Common myeloid progenitor, CD34-positive (primary cell): ENCODE measurements at regions of chr9 and their contacts with region 1.

Region 1: GRCh38 chr9:115013998-115014397 is 83.6 kb upstream of the TNFSF8 start:
- DNase-seq: peak; percentile 72 to 90 (median 83)
- H3K4me3 ChIP-seq: no peak overlapping the region
- H3K27ac ChIP-seq: no peak overlapping the region
- H3K4me1 ChIP-seq: peaks cover 0 to 2% (median 0%) of the 10 kb centered on the region in 4 experiments
- H3K27me3 ChIP-seq: no peaks in the 10 kb centered on the region

Region 2: DNA sequence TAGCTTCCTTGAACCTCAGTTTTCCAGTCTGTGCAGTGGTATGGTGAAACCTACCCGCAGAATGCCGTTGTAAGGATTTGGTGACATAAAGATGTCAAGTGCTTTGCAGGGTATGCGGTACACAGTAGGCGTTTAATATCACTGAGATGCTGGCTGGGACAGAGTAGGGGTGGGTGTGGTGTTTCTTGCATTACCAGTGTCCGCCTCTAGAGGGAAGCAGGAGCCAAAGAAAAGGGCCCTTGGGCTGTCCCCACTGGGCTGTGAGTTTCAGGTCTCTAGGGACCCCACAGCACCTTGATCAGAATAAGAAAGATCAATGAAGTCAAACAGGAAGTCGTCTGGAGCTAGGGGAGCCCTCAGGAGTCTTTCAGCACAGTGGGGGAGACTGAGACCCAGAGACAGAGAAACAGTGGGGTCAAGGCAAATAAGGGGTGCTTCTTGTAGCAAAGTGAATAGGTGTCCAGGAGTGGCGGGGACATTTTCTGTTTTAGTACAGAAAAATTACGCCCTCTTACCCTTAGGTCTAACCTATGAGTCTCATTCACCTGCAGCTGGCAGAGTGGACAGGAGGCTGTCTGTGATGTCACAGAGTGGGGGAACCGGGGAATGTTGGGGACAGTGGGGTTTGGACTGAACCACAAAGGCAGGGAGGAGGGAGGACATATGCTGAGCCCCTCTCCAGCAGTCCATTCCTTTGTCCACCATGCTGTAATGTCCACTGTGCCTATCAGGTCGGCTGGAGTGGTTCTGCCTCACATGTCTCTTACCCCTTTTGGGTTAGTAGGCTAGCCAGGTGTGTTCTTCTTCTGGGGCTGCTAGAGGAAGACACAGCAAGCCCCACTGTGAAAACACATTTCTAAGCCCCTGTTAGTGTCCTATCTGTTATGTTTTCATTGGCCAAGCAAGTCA is 351.7 kb before region 1 on chr9:
- CTCF ChIA-PET with region 1: interaction called, 10 read pairs
- POLR2A ChIA-PET with region 1: no interaction called
- DNase-seq: peak; percentile 42 to 63 (median 56)
- H3K4me3 ChIP-seq: no peak overlapping the region
- H3K27ac ChIP-seq: no peak overlapping the region
- H3K4me1 ChIP-seq: peaks cover 0 to 8% (median 5%) of the 10 kb centered on the region in 4 experiments
- H3K27me3 ChIP-seq: no peaks in the 10 kb centered on the region

Region 3: DNA sequence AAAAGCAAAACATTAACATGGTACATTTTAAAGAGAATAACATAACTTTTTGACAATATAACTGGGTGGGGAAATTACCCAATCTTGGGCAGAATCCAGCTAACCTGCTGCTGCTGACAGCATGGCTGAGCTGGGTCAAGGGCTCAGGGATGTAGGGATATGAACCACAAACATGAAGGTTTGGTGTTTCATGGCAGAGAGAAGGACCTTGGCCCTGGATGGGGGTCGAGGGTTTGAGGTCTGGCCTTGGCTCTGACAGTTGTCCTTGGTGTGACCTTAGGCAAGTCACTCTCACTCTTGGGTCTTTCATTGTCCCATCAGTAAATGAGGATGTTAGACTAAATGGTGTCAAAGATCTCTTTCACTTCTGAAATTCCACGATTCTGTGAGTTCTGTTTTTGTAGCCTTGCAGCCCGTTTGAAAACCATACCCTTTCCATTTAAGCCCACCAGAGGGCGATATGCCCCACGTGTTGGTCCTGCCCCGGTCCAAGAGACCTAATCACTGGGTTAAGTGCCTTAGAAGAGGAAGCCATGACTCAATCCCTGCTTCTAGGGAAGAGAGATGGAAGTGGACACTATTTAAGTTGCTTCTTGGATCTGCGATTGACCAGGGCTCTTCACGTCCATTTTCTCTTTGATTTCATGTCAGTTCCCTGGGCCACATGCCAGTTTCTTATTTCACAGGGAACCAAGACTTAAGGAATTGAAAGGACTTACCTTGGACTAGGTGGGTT is 275.2 kb before region 1 on chr9:
- CTCF ChIA-PET with region 1: interaction called, 90 read pairs
- POLR2A ChIA-PET with region 1: no interaction called
- DNase-seq: peak; percentile 83 to 93 (median 88)
- H3K4me3 ChIP-seq: no peak overlapping the region
- H3K27ac ChIP-seq: no peak overlapping the region
- H3K4me1 ChIP-seq: peaks cover 0 to 8% (median 2%) of the 10 kb centered on the region in 4 experiments
- H3K27me3 ChIP-seq: peaks cover 0 to 2% (median 0%) of the 10 kb centered on the region in 5 experiments

Region 4: DNA sequence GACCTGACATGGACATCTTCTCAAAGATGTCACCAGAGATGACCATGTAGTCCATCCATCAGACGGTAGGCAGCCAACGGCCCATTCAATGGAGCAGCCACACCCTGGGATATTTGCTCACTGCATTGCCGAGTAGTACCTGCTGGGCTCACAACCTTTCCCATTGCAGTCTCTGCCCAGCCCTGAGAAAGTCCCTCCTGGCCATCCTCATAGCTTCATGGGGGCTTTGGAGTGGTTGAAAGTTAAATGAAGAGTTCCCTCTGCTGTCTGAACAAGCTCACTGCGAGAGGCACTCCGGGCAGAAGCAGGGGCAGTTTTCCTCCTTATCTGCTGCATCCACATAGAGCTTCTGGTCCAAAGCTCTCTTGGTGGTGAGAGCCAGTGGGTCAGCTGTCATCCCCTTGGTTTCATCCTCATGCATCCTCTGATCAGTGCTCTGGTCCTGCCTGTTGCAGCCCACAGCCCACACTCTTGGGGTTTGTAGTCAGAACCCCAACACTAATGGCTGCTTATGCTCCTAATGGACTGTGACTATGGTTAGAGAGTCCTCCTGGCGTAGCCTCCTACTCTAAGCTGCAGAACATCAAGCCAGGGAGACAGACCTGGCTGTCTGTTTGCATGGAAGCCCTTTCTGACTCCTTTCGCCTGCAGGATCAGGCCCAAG is 107.0 kb before region 1 on chr9:
- CTCF ChIA-PET with region 1: interaction called, 79 read pairs
- POLR2A ChIA-PET with region 1: no interaction called
- DNase-seq: peak; percentile 46 to 63 (median 55)
- H3K4me3 ChIP-seq: no peak overlapping the region
- H3K27ac ChIP-seq: no peak overlapping the region
- H3K4me1 ChIP-seq: peaks cover 0 to 10% (median 5%) of the 10 kb centered on the region in 4 experiments
- H3K27me3 ChIP-seq: no peaks in the 10 kb centered on the region

Region 5: DNA sequence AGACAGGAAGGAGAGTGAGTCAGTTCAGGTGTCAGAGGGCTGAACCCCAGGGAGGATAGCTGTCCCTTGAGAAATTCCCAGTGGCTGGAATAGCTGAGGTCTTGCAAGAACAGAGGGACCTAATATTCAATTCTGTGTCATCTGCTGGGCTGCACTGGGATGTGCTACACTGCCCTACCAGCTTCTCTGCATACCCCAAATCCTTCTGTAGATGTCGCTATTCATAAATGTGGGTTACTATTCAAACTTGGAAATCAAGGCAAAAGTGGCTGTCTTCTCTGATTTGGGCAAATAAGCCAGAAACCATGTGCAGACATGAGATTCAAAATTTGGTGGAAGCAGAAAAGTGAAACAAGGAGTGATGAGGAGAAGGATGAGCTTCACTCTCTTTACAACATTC is 99.9 kb before region 1 on chr9:
- CTCF ChIA-PET with region 1: interaction called, 79 read pairs
- POLR2A ChIA-PET with region 1: no interaction called
- DNase-seq: no peak
- H3K4me3 ChIP-seq: no peak overlapping the region
- H3K27ac ChIP-seq: no peak overlapping the region
- H3K4me1 ChIP-seq: peaks cover 2 to 19% (median 8%) of the 10 kb centered on the region in 4 experiments
- H3K27me3 ChIP-seq: no peaks in the 10 kb centered on the region

Region 6: DNA sequence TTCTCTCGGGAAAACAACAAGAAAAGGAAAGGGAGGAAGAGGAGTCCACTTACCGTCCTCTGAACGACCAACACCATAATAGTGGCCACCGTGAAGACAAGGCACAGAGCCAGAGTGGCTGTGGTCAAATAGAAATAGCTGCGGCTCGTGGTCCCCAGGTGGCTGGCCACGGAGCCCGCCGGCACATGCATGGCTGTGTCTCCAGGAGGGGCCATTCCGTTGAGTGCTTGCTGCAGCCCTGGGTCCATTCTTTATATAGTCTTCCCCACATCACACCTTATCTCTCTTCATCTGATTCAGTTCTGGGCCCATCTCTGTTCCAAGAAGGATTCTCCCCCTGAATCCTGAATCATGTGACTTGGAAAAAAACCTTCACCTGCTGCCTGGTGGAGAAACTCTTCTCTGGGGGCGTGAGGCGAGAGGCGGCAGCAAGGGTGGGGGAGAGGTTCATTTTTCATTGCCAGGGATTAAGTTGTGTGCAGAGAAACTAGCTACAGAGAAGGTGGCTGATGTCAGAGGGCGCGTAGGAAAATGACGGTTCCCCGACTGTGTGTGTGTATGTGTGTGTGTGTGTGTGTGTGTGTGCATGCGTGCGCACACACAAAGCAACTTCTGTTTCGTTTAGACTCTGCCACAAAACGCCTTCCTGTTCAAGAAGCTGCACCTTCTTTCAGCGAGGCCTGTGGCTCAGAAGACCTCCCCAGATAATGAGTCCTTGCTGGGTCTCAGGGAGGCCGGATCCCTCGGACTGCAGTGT is 83.8 kb before region 1 on chr9 and contains the start of gene TNFSF8:
- CTCF ChIA-PET with region 1: interaction called, 16 read pairs
- POLR2A ChIA-PET with region 1: no interaction called
- DNase-seq: peak; percentile 79 to 96 (median 95)
- H3K4me3 ChIP-seq: peak within 1 kb of the TSS; percentile 29 to 84 (median 69)
- H3K27ac ChIP-seq: peak within 1 kb of the TSS; percentile 47 to 72
- H3K4me1 ChIP-seq: peaks cover 25 to 45% (median 37%) of the 10 kb centered on the region in 4 experiments
- H3K27me3 ChIP-seq: no peaks in the 10 kb centered on the region

Region 7: GRCh38 chr9:115024969-115025427 is 11.0 kb after region 1 on chr9:
- CTCF ChIA-PET with region 1: no interaction called
- POLR2A ChIA-PET with region 1: no interaction called
- DNase-seq: no peak
- H3K4me3 ChIP-seq: no peak overlapping the region
- H3K27ac ChIP-seq: no peak overlapping the region
- H3K4me1 ChIP-seq: no peaks in the 10 kb centered on the region
- H3K27me3 ChIP-seq: no peaks in the 10 kb centered on the region

Region 8: GRCh38 chr9:115058684-115059315 is 44.8 kb after region 1 on chr9:
- CTCF ChIA-PET with region 1: no interaction called
- POLR2A ChIA-PET with region 1: no interaction called
- DNase-seq: no peak
- H3K4me3 ChIP-seq: no peak overlapping the region
- H3K27ac ChIP-seq: no peak overlapping the region
- H3K4me1 ChIP-seq: no peaks in the 10 kb centered on the region
- H3K27me3 ChIP-seq: peaks cover 0 to 13% (median 0%) of the 10 kb centered on the region in 5 experiments